CD4-positive, alpha-beta memory T cell (primary cell): ENCODE measurements at regions of chr18 and their contacts with region 1.

Region 1: DNA sequence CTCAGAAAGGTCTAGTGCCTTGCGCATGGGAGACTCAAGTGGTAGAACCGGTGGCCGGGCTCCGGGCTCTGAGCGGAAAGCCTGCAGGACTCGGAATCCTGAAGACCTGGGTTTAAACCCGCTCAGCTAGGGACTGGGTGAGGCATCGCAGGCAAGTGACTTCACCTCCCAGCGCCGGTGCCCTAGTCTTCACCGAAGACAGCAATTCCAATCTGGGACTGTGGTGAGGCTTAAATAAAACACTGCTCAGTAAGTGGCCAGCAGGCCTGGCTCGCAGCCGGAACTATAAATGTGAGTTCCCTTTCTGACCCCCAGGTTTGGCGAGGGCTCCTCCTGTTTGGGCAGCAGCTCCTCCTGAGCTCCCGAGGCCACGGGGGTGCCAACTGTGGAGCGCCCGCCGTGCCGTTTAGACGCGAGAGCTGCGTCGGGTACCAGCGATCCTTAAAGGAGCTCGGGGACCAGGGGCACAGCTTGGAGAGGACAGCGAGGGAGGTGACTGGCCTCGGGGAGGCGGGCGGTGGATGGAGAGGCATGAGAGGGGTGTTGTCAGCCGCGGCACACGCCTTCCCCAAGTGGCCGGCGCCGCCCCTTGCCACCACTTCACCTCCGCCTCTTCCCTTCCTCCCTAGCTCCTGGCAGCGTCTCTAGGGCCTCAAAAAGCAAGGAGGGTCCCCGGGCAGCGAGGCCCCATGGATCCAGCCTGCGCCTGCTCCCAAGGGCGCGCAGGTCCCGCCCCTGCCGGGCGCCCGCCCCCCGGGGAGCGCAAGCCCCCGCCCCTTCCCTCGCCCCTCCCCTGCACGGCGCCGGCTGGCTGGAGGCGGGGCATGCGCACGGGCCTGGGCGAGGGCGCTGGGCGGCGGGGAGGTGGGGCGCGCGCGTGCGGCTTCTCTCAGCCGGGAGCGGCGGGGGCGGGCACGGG is 736 bp upstream of the MTCL1 start:
- DNase-seq: peak; percentile 76 to 86 (median 79)
- H3K4me3 ChIP-seq: peak overlapping the region; percentile 54 to 73
- H3K4me3 Mint-ChIP-seq: peak overlapping the region; percentile 87 to 96 (median 91)
- H3K27ac ChIP-seq: peak overlapping the region; percentile 48
- H3K27ac Mint-ChIP-seq: peak overlapping the region in 4 of 7 donors; percentile 50 to 79 (median 72)
- H3K4me1 ChIP-seq: peaks cover 26% of the 10 kb centered on the region
- H3K4me1 Mint-ChIP-seq: peaks cover 10 to 35% (median 15%) of the 10 kb centered on the region in 4 donors
- H3K27me3 ChIP-seq: peaks cover 29% of the 10 kb centered on the region
- H3K27me3 Mint-ChIP-seq: peaks cover 36 to 58% of the 10 kb centered on the region in 2 donors

Region 2: DNA sequence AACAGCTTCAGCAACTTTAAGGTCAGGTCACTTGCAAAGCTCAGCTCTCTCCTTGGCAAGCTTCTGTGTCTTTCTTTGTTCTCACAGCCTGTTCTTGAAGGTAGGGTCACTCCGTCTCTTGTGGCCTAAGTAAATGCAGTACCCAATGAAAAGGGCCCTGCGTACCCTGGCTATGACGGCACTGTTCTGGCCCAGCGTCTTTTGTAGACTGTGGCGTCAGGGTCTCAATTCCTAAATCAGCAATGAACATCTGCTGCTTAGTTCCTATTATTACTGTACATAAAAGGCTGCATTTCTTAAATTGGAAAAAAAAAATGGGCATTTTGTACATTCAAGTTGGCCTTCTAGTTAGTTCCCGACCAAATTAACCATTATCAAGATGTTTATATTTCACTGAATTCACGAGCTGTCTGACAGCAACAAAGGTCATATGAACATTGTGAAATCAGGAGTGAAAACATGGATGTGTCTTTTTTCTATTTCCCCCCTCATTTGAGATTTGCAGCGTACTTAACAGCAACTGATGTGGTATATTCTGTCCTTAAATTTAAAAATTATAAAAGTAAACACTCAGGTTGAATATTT is 16.3 kb before region 1 on chr18:
- CTCF ChIA-PET with region 1: no interaction called
- POLR2A ChIA-PET with region 1: no interaction called
- intact Hi-C with region 1: no loop called
- DNase-seq: no peak
- H3K4me3 ChIP-seq: no peak overlapping the region
- H3K4me3 Mint-ChIP-seq: no peak overlapping the region
- H3K27ac ChIP-seq: no peak overlapping the region
- H3K27ac Mint-ChIP-seq: no peak overlapping the region
- H3K4me1 ChIP-seq: no peaks in the 10 kb centered on the region
- H3K4me1 Mint-ChIP-seq: no peaks in the 10 kb centered on the region
- H3K27me3 ChIP-seq: no peaks in the 10 kb centered on the region
- H3K27me3 Mint-ChIP-seq: peaks cover 4% of the 10 kb centered on the region in 2 donors

Region 3: DNA sequence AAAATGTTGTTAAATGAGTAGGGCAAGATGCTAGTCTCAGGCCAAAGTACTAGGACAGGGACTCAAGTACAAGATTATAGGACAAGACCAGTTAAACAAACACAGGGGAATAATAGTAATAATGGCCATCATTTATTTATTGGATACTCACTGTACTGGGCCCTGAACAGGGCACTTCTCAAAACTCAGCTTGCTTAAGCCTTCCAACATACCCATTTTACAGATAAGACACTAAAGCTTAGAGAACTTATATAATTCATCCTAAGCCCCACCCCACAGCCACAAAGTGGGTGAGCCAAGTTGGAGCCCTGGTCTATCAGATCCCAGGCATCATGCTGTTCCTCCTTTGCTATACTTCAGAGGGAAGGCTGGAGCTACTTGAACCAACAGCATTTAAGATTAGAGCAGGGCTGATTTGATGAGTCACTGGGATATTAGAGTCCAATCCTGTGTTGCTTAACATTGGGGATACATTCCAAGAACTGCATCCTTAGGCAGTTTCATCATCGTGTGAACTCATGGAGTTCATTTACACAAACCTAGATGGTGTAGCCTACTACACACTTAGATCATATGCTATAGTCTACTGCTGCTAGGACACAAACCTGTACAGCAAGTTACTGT is 154.4 kb after region 1 on chr18:
- CTCF ChIA-PET with region 1: no interaction called
- POLR2A ChIA-PET with region 1: no interaction called
- intact Hi-C with region 1: no loop called
- DNase-seq: no peak
- H3K4me3 ChIP-seq: no peak overlapping the region
- H3K4me3 Mint-ChIP-seq: no peak overlapping the region
- H3K27ac ChIP-seq: no peak overlapping the region
- H3K27ac Mint-ChIP-seq: no peak overlapping the region
- H3K4me1 ChIP-seq: no peaks in the 10 kb centered on the region
- H3K4me1 Mint-ChIP-seq: no peaks in the 10 kb centered on the region
- H3K27me3 ChIP-seq: no peaks in the 10 kb centered on the region
- H3K27me3 Mint-ChIP-seq: peaks cover 6 to 7% of the 10 kb centered on the region in 2 donors

Region 4: DNA sequence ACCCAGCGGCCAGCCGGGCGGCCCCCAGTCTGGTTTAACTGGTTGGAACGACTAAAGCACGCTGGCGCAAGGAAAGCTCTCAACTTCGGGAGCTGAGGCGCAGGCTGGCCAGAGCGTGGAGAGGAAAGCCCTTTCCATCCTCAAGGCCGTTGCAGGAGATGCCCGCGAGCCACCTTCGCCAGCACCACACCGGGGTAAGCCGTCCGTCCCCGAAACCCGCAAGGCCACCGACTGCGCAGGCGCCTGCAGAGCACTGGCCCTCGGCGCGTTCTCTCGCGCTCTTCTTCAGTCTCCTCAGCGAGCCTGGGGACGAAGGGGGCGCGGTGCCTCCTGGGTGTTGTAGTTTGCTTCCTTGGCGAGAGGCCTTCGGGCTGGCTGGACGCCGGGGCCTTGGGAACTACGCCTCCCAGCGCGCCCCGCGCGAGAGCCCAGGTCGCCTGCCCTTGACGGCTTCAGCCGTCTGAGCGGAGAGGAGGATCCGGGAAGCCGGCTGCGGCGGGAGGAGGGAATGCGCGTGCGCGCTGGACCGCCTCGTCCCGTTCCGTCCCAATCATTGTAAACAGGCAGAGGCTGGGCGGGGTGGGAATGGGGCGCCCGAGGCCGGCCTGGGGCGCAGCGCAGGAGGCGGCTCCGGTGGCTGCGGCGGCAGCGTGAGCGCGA is 770.5 kb after region 1 on chr18 and contains the start of gene RALBP1:
- CTCF ChIA-PET with region 1: no interaction called
- POLR2A ChIA-PET with region 1: no interaction called
- intact Hi-C with region 1: loop called (anchors 2 kb)
- DNase-seq: peak; percentile 96 to 98 (median 97)
- H3K4me3 ChIP-seq: peak within 1 kb of the TSS; percentile 86
- H3K4me3 Mint-ChIP-seq: peak within 1 kb of the TSS; percentile 94 to 99 (median 98)
- H3K27ac ChIP-seq: peak within 1 kb of the TSS; percentile 79
- H3K27ac Mint-ChIP-seq: peak within 1 kb of the TSS; percentile 95 to 98 (median 96)
- H3K4me1 ChIP-seq: peaks cover 24% of the 10 kb centered on the region
- H3K4me1 Mint-ChIP-seq: peaks cover 25 to 46% (median 33%) of the 10 kb centered on the region in 4 donors
- H3K27me3 ChIP-seq: no peaks in the 10 kb centered on the region
- H3K27me3 Mint-ChIP-seq: peaks cover 3 to 5% of the 10 kb centered on the region in 2 donors
- total RNA-seq, gene RALBP1: 44.9 to 49.9 TPM